GM12878 (cell line): ENCODE measurements at regions of chr22 and their contacts with region 1.

Region 1: DNA sequence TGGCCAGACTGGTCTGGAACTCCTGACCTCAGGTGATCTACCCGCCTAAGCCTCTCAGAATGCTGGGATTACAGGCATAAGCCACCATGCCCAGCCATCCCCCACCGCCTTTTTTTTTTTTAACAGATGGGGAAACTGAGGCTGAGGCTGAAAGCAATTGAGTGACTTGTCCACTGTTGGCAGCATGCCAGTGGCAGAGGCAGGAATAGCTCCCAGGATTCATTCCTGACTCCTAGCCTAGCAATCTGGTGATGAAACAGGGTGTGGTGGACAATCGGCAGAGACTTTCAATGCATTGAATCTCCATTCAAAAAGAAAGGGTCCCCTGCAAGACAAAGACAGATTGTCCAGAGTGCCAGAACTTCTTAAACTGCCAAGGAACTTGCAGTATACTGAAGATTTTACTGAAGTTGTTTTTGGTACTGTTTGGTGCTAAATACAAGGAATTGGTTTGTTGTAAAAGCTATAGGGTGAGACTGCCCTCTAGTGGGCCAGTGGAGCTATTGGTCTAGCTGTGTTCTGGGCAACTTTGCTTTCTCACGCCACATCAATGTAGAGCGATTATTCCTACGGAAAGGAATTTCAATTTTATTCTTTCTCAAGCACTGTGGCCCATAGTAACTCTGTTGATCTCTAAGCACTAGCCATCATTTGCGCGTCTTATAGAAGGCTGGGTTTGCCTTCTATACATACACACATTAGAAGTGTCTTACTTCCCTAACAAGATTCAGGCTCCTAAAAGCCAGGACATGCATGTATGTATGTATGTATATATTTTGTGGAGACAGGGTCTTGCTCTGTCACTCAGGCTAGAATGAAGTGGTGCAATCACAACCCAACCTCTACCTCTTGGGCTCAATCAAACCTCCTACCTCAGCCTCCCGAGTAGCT is 21.0 kb downstream of the C22orf31 start:
- DNase-seq: peak; percentile 36
- ATAC-seq: peak; percentile 92
- H3K4me3 ChIP-seq: no peak overlapping the region
- H3K27ac ChIP-seq: no peak overlapping the region
- H3K4me1 ChIP-seq: no peaks in the 10 kb centered on the region
- H3K27me3 ChIP-seq: no peaks in the 10 kb centered on the region
- CTCF ChIP-seq: peak; percentile 92 to 98 (median 94)
- EP300 ChIP-seq: no peak
- POLR2A ChIP-seq: no peak
- RAD21 ChIP-seq: peak; percentile 97

Region 2: DNA sequence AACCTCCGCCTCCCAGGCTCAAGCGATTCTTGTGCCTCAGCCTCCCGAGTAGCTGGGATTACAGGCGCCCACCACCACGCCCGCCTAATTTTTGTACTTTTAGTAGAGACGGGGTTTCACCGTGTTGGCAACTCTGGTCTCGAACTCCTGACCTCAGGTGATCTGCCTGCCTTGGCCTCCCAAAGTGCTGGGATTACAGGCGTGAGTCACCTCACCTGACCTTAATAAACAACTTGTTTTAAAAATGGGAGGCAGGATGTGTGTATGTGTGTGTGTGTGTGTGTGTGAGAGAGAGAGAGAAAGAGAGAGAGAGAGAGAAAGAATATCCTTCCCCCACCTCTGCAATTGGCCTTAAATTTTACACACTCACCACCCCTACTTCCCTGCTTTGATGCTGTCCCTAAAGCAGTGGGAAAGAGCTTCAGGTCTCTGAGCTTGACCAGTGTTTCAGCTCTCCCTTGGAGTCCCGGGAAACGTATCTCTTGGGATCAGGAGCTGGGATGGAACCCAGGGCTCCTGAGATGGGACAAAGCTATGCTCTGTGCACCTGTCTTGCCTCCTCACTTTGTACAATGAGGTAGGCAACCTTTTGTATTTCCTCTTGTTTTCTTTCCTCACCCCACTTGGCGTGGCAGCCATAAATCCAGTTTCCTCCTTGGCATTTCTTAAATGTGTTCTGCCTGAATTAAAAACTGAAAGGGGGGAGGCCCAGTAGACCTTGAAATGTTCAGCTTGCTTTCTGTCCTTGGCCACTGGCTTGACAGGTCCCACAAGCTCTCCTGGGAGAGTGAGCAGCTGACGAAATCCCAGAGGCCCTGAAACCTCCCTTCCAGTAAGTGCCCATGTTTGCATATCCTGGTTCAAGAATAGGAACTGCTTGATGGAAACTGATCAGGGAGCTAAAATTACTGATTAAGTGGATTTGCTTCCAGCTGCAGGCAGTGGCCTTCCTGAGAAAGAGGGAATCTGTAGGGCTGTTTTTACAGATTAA is 222.4 kb before region 1 on chr22:
- CTCF ChIA-PET with region 1: interaction called, 13 read pairs
- POLR2A ChIA-PET with region 1: no interaction called
- RAD21 ChIA-PET with region 1: interaction called, 6 read pairs
- SMC1A ChIA-PET with region 1: interaction called, 9 read pairs
- in situ Hi-C with region 1: no loop called
- intact Hi-C with region 1: no loop called
- DNase-seq: no peak
- ATAC-seq: peak; percentile 50
- H3K4me3 ChIP-seq: 0 out of 2 replicates have a peak overlapping the region, but pooled peaks have one; percentile 8
- H3K27ac ChIP-seq: peak overlapping the region; percentile 49
- H3K4me1 ChIP-seq: peaks cover 42% of the 10 kb centered on the region
- H3K27me3 ChIP-seq: no peaks in the 10 kb centered on the region
- CTCF ChIP-seq: no peak
- EP300 ChIP-seq: no peak
- POLR2A ChIP-seq: no peak
- RAD21 ChIP-seq: no peak

Region 3: DNA sequence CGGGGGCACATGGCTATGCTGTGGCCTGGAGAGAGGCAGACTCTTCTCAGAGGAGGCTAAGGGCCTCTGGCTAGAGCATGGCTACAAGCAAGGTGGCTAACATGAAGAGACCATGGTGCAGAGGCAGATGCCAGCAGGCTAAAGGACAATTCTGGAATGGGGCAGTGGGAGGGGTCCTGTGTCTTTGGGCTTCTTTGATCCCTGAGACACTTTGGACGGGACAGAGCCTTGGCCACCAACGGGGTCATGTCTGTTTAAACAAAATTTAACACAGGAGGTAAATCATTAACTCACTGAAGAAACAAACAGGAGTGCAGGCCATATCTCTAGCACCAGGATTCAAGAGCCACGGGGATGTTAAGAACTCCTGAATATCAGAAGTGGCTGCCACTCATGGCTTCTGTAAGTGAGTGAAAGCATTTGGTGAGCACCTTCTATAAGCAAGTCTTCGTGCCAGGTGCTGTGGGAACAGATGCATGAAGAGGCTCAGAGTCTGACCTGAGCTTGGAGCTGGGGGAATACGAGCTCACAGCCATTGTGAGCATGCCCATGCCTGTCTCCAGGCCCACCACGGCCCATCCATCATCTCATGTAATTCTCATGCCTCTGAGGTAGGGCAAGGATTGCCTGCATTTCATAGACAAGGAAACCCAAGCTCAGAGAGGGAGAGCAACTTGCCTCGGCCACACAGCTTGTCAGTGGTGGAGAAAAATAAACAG is 175.6 kb before region 1 on chr22:
- CTCF ChIA-PET with region 1: interaction called, 14 read pairs
- POLR2A ChIA-PET with region 1: interaction called, 3 read pairs
- RAD21 ChIA-PET with region 1: interaction called, 10 read pairs
- SMC1A ChIA-PET with region 1: interaction called, 187 read pairs
- in situ Hi-C with region 1: no loop called
- intact Hi-C with region 1: no loop called
- DNase-seq: no peak
- ATAC-seq: no peak
- H3K4me3 ChIP-seq: no peak overlapping the region
- H3K27ac ChIP-seq: no peak overlapping the region
- H3K4me1 ChIP-seq: no peaks in the 10 kb centered on the region
- H3K27me3 ChIP-seq: no peaks in the 10 kb centered on the region
- CTCF ChIP-seq: no peak
- EP300 ChIP-seq: no peak
- POLR2A ChIP-seq: no peak
- RAD21 ChIP-seq: no peak

Region 4: GRCh38 chr22:28930357-28931007 is 110.1 kb before region 1 on chr22:
- CTCF ChIA-PET with region 1: interaction called, 56 read pairs
- POLR2A ChIA-PET with region 1: no interaction called
- RAD21 ChIA-PET with region 1: interaction called, 38 read pairs
- SMC1A ChIA-PET with region 1: interaction called, 15 read pairs
- in situ Hi-C with region 1: no loop called
- intact Hi-C with region 1: no loop called
- DNase-seq: no peak
- ATAC-seq: peak; percentile 84
- H3K4me3 ChIP-seq: no peak overlapping the region
- H3K27ac ChIP-seq: no peak overlapping the region
- H3K4me1 ChIP-seq: no peaks in the 10 kb centered on the region; the same call in 1 of the 2 replicates
- H3K27me3 ChIP-seq: peaks cover 0 to 6% of the 10 kb centered on the region in 2 experiments; a peak in 1 of 4 replicates
- CTCF ChIP-seq: no peak
- EP300 ChIP-seq: no peak
- POLR2A ChIP-seq: no peak
- RAD21 ChIP-seq: no peak

Region 5: GRCh38 chr22:29004647-29005371 is 35.8 kb before region 1 on chr22:
- CTCF ChIA-PET with region 1: no interaction called
- POLR2A ChIA-PET with region 1: no interaction called
- RAD21 ChIA-PET with region 1: interaction called, 6 read pairs
- SMC1A ChIA-PET with region 1: interaction called, 10 read pairs
- in situ Hi-C with region 1: no loop called
- intact Hi-C with region 1: no loop called
- DNase-seq: no peak
- ATAC-seq: peak; percentile 44
- H3K4me3 ChIP-seq: no peak overlapping the region
- H3K27ac ChIP-seq: no peak overlapping the region
- H3K4me1 ChIP-seq: no peaks in the 10 kb centered on the region
- H3K27me3 ChIP-seq: no peaks in the 10 kb centered on the region
- CTCF ChIP-seq: no peak
- EP300 ChIP-seq: no peak
- POLR2A ChIP-seq: no peak
- RAD21 ChIP-seq: no peak

Region 6: DNA sequence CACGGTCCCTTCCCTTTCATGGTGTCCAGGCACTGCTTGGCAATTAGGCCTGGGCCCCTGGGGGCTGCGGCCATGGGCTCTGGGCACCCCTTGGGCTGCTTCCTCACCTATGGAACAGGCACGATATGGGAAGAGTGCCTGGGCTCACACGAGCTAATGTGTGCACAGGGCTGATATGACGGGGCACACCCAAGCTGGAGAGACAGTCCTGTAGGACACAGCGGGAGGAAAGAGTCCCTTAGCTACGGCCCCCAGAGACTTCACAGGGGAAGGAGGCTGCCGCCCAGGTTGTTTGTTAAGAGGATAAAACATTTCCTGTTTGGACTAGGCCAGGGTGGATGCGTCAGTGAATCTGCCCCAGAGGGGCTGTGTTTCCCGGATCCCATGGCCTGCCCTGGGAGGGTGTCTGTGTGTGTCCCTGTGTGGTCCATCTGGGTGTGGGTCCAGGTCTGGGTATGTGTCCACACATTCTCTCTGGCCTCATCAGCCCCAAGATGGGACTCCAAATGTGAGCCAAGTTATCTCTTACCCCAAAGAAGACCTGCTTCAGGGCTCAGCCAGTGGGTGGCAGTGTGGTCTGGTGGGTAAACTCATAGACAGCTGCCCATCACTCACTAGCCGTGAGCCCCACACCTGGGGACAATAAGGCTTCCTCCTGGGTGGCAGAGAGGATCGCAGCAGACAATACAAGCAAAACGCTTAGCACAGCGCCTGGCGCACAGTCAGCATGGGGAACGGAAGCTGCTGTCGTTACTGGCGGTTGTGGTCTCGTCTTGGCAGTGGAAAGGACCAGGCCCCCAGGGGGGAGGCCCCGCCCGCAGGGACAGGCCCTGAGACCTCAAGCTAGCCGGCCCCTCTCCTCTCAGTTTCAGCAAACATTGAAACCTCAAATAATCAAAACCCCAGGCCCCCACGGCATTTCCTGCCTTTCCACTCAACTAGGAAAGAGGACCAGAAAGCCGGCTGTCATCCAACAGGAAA is 161.9 kb after region 1 on chr22:
- CTCF ChIA-PET with region 1: interaction called, 3 read pairs
- POLR2A ChIA-PET with region 1: no interaction called
- RAD21 ChIA-PET with region 1: interaction called, 9 read pairs
- SMC1A ChIA-PET with region 1: interaction called, 11 read pairs
- in situ Hi-C with region 1: no loop called
- intact Hi-C with region 1: no loop called
- DNase-seq: peak; percentile 91
- ATAC-seq: peak; percentile 77
- H3K4me3 ChIP-seq: peak overlapping the region; percentile 15; the same call in 1 of the 2 replicates
- H3K27ac ChIP-seq: peak overlapping the region; percentile 90
- H3K4me1 ChIP-seq: peaks cover 45% of the 10 kb centered on the region
- H3K27me3 ChIP-seq: no peaks in the 10 kb centered on the region; a peak in 1 of 4 replicates
- CTCF ChIP-seq: peak; percentile 41 to 43 (median 42); a peak in 4 of 6 replicates
- EP300 ChIP-seq: peak; percentile 76 to 94
- POLR2A ChIP-seq: peak; percentile 79
- RAD21 ChIP-seq: peak; percentile 15; the same call in 1 of the 2 replicates

Region 7: DNA sequence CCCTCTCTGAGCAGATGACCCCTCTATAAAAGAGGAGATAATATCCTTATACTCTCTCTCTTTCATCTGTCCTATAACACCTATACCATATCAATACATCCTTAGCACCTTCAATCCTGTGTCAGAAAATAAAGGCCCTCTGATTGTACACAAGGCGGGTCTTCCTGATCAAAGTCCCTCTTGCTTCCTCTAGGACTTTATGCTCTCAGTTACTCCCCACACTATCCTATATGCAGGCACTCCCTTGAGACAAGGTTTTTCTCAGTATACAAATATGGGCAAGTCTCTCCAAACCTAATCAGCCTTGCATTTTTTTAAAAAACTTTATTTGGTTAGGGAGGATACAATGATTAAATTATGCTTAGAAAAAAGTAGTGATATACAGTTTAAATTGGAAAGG is 1022.3 kb after region 1 on chr22:
- CTCF ChIA-PET with region 1: no interaction called
- POLR2A ChIA-PET with region 1: no interaction called
- RAD21 ChIA-PET with region 1: no interaction called
- SMC1A ChIA-PET with region 1: no interaction called
- in situ Hi-C with region 1: no loop called
- intact Hi-C with region 1: no loop called
- DNase-seq: no peak
- ATAC-seq: no peak
- H3K4me3 ChIP-seq: no peak overlapping the region
- H3K27ac ChIP-seq: no peak overlapping the region
- H3K4me1 ChIP-seq: no peaks in the 10 kb centered on the region
- H3K27me3 ChIP-seq: no peaks in the 10 kb centered on the region
- CTCF ChIP-seq: no peak
- EP300 ChIP-seq: no peak
- POLR2A ChIP-seq: no peak
- RAD21 ChIP-seq: no peak